GM12878 (cell line): ENCODE measurements at regions of chr13 and their contacts with region 1.

Region 1: GRCh38 chr13:98653463-98653985 is 76.6 kb upstream of the STK24 start:
- DNase-seq: peak; percentile 39
- ATAC-seq: peak; percentile 99
- H3K4me3 ChIP-seq: no peak overlapping the region
- H3K27ac ChIP-seq: no peak overlapping the region
- H3K4me1 ChIP-seq: peaks cover 3% of the 10 kb centered on the region; the same call in 1 of the 2 replicates
- H3K27me3 ChIP-seq: no peaks in the 10 kb centered on the region
- CTCF ChIP-seq: peak; percentile 91 to 92 (median 92)
- EP300 ChIP-seq: no peak
- POLR2A ChIP-seq: no peak
- RAD21 ChIP-seq: peak; percentile 94

Region 2: DNA sequence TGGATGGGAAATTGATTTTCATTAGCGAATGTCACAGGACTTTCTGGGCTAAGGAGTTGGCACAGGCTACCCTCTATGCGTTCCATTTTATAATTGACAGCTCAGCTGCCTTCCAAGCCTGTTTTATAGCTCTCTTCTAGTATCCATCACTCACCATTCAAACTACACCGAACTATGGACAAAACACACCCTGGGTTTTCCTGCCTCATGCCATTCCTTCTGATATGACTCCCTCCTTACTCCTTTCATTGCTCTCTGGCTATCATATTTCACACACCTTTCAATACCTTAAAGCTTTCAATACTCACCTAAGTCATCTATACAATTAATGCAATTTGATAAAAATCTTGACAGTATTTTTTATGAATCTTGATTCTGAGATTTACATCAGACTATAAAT is 1038.3 kb before region 1 on chr13:
- CTCF ChIA-PET with region 1: no interaction called
- POLR2A ChIA-PET with region 1: no interaction called
- RAD21 ChIA-PET with region 1: no interaction called
- SMC1A ChIA-PET with region 1: no interaction called
- in situ Hi-C with region 1: no loop called
- intact Hi-C with region 1: no loop called
- DNase-seq: no peak
- ATAC-seq: no peak
- H3K4me3 ChIP-seq: no peak overlapping the region
- H3K27ac ChIP-seq: no peak overlapping the region
- H3K4me1 ChIP-seq: no peaks in the 10 kb centered on the region
- H3K27me3 ChIP-seq: no peaks in the 10 kb centered on the region
- CTCF ChIP-seq: no peak
- EP300 ChIP-seq: no peak
- POLR2A ChIP-seq: no peak
- RAD21 ChIP-seq: no peak

Region 3: DNA sequence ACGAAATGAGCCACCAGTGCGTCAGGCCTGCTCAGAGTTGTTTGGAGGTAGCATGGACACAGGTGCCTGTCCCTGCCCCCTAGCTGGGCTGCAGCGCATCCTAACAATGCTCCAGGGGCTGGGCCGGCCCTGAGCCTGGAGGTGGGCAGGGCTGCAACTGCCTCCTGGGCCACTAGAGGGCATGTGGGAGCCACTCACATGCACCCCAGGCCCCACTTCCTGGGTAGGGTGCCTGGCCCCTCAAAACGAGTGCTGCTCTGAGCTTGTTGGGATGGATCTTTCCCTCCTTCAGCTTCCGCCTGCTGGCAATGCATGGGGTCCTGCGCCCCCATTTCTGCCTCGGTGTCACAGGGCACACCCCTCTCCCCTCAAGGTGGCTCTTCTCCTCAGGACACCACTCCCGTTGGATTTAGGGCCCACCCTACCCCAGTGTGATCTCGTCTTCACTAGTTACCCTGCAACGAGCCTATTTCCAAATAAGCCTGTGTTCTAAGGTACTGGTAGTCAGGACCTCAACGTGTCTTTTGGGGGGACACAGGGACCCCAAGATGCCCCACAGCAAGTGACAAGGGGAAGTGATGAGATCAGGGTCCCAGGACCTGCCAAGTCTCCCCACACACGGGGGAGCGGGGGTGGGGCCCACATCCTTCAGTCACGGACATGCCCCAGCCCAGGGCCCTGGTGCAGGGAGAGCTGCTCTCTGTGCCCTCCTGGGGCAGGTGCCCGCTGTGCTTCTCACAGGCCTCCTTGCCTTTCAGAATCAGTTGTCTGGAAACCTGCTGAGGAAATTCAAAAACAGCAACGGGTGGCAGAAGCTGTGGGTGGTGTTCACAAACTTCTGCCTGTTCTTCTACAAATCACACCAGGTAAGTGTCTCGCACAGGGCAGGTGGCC is 207.9 kb before region 1 on chr13:
- CTCF ChIA-PET with region 1: interaction called, 135 read pairs
- POLR2A ChIA-PET with region 1: no interaction called
- RAD21 ChIA-PET with region 1: interaction called, 89 read pairs
- SMC1A ChIA-PET with region 1: interaction called, 66 read pairs
- in situ Hi-C with region 1: loop called (anchors 5 kb)
- intact Hi-C with region 1: loop called (anchors 1 kb)
- DNase-seq: peak; percentile 17
- ATAC-seq: peak; percentile 97
- H3K4me3 ChIP-seq: no peak overlapping the region
- H3K27ac ChIP-seq: peak overlapping the region; percentile 53
- H3K4me1 ChIP-seq: peaks cover 6% of the 10 kb centered on the region
- H3K27me3 ChIP-seq: no peaks in the 10 kb centered on the region
- CTCF ChIP-seq: peak; percentile 90 to 100 (median 98); a peak in 5 of 6 replicates
- EP300 ChIP-seq: no peak
- POLR2A ChIP-seq: no peak; the same call in 1 of the 2 replicates
- RAD21 ChIP-seq: peak; percentile 93

Region 4: DNA sequence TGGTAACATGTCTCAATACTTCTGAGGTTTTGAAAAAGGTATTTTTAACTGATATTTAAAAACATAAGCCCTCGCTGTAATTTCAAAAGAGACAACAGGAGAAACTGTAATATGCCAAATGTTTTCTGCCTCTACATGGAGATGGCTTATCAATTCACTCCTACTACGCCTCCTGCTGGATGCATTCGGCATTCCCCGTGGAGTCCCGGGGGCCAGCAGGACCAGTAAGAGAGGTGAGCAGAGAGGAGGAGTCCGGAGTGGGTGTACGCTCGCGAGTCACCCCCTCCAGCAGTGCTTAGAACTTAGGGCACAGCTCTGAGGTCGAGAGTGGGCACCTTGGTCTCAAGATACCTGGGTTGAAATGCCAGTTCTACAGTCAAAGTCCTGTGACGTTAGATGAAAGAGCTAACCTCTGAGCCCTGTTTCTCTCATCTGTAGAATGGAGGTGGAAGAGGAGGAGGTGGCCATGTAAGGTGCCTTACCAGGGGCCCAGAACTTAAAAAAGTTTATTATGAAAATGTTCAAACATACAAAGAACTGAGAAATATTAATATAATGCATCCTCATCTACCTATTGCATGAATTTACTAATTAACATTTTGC is 186.8 kb before region 1 on chr13:
- CTCF ChIA-PET with region 1: interaction called, 54 read pairs
- POLR2A ChIA-PET with region 1: no interaction called
- RAD21 ChIA-PET with region 1: interaction called, 5 read pairs
- SMC1A ChIA-PET with region 1: interaction called, 15 read pairs
- in situ Hi-C with region 1: no loop called
- intact Hi-C with region 1: loop called (anchors 5 kb)
- DNase-seq: no peak
- ATAC-seq: peak; percentile 78
- H3K4me3 ChIP-seq: no peak overlapping the region
- H3K27ac ChIP-seq: no peak overlapping the region
- H3K4me1 ChIP-seq: no peaks in the 10 kb centered on the region
- H3K27me3 ChIP-seq: no peaks in the 10 kb centered on the region
- CTCF ChIP-seq: peak; percentile 31 to 65 (median 61); a peak in 5 of 6 replicates
- EP300 ChIP-seq: no peak
- POLR2A ChIP-seq: no peak
- RAD21 ChIP-seq: peak; percentile 37

Region 5: GRCh38 chr13:98484289-98485219 is 169.0 kb before region 1 on chr13:
- CTCF ChIA-PET with region 1: interaction called, 56 read pairs
- POLR2A ChIA-PET with region 1: interaction called, 4 read pairs
- RAD21 ChIA-PET with region 1: interaction called, 40 read pairs
- SMC1A ChIA-PET with region 1: interaction called, 38 read pairs
- in situ Hi-C with region 1: no loop called
- intact Hi-C with region 1: no loop called
- DNase-seq: no peak
- ATAC-seq: peak; percentile 70
- H3K4me3 ChIP-seq: no peak overlapping the region
- H3K27ac ChIP-seq: peak overlapping the region; percentile 79
- H3K4me1 ChIP-seq: peaks cover 81% of the 10 kb centered on the region
- H3K27me3 ChIP-seq: no peaks in the 10 kb centered on the region
- CTCF ChIP-seq: no peak
- EP300 ChIP-seq: no peak
- POLR2A ChIP-seq: no peak
- RAD21 ChIP-seq: no peak

Region 6: DNA sequence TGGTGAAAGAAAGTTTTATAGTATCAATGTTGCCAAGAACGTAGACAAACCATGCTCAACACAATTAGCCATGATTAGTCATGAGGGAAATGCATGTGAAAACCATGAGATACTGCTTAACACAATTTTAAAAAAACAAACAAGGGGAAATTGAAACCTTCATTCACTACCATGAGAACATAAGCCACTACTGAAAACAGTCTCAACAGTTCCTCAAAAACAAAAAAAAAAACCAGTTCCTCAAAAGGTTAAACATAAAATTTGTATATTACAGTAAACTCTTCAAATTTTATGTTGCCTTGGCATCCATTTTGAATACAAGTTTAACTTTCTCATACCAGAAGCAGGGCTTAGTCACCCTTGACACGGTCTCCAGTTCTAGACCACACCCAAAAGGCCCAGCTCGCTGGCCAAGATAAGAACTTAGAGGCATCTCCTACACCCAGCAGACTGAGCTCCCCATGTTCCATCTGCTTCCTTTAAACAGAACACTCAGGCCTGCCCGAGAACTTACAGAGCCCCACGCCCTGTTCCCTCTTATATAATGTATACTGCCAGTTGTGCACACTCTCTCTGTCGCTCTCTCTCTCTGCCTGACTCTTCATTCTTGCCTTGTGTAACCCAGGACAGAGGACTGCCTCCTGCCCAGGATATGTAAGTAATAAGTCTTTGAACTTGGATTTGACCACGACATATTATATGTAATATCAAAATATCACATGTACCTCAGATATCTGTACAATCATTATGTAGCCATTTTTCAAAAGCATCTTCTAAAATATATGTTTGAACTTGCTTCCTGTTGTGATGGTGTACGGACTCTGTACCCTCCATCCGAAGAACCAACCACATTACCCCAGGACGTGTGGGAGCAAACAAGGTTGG is 144.0 kb before region 1 on chr13:
- CTCF ChIA-PET with region 1: interaction called, 20 read pairs
- POLR2A ChIA-PET with region 1: no interaction called
- RAD21 ChIA-PET with region 1: interaction called, 11 read pairs
- SMC1A ChIA-PET with region 1: interaction called, 12 read pairs
- in situ Hi-C with region 1: no loop called
- intact Hi-C with region 1: no loop called
- DNase-seq: peak; percentile 79
- ATAC-seq: peak; percentile 67
- H3K4me3 ChIP-seq: no peak overlapping the region
- H3K27ac ChIP-seq: peak overlapping the region; percentile 72
- H3K4me1 ChIP-seq: peaks cover 80% of the 10 kb centered on the region
- H3K27me3 ChIP-seq: no peaks in the 10 kb centered on the region
- CTCF ChIP-seq: no peak
- EP300 ChIP-seq: peak; percentile 49 to 72; a peak in 2 of 4 replicates
- POLR2A ChIP-seq: no peak
- RAD21 ChIP-seq: no peak

Region 7: DNA sequence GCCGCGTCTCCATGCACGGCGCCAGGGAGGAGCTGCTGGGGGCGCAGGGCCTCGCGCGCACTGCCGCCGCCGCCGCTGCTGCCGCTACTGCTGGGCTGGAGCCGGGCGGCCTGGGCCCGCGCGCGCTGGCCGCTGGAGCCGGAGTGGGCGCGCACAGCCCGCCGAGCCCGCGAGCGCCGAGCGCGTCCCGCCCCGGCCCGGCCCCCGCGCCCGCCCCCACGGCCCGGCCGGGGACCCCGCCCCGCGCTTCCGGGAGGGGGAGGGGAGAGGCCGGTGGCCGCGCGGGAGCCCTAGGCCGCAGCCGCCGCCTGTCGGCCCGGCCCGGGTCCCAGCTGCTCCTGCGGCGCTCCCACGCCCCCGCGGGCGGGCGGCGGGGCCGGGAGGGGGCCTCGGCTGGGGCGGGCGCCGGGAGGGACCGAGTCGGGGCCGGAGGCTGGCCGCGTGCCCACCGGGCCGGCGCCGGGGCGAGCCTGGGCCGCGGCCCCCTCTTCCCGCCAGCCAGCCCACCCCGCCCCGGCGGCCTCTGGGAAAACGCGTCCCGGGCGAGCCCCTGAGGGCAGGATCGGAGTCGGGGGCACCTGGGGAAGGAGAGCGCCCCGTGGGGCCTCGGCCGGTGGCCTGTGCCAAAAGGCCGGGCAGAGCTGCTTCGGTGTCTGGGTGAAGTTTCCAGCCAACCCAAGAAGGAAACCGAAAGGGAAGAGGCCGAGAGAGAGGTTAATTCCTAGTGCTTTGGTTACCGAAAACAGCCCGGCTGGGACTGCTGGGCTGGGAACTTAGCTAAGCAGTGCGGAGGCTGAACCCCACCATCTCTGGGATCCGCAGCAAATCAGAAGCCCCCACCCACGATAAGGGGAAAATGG is 76.3 kb before region 1 on chr13 and contains the start of gene STK24:
- CTCF ChIA-PET with region 1: interaction called, 20 read pairs
- POLR2A ChIA-PET with region 1: no interaction called
- RAD21 ChIA-PET with region 1: interaction called, 13 read pairs
- SMC1A ChIA-PET with region 1: interaction called, 8 read pairs
- in situ Hi-C with region 1: no loop called
- intact Hi-C with region 1: loop called (anchors 5 kb)
- DNase-seq: no peak
- ATAC-seq: peak; percentile 45
- H3K4me3 ChIP-seq: peak within 1 kb of the TSS; percentile 87
- H3K27ac ChIP-seq: peak within 1 kb of the TSS; percentile 81
- H3K4me1 ChIP-seq: peaks cover 12% of the 10 kb centered on the region
- H3K27me3 ChIP-seq: no peaks in the 10 kb centered on the region
- CTCF ChIP-seq: peak in 1 of 3 experiments; percentile 24; a peak in 1 of 6 replicates
- EP300 ChIP-seq: no peak
- POLR2A ChIP-seq: peak; percentile 78
- RAD21 ChIP-seq: no peak
- polyA plus RNA-seq, gene STK24: 9.9 to 19.1 TPM

Region 8: DNA sequence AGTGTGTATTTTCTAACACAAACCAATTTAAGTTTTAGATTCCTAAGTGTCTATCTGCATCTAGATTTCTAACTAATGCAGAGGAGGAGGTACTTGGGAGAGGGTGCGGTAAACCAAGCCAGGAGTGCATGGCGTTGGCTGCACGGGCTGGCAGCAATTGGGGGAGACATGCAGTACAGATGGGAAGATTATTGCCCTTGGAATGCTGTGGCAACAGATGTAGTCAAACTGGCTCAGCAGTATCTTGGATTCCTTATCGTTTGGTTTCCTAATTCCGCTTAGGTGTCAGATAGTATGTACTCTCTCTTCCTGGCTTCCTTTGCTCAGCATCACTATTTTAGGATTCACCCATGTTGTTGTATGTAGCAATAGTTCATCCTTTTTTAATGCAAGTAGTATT is 47.2 kb before region 1 on chr13:
- CTCF ChIA-PET with region 1: no interaction called
- POLR2A ChIA-PET with region 1: no interaction called
- RAD21 ChIA-PET with region 1: no interaction called
- SMC1A ChIA-PET with region 1: no interaction called
- in situ Hi-C with region 1: no loop called
- intact Hi-C with region 1: no loop called
- DNase-seq: no peak
- ATAC-seq: no peak
- H3K4me3 ChIP-seq: no peak overlapping the region
- H3K27ac ChIP-seq: no peak overlapping the region
- H3K4me1 ChIP-seq: no peaks in the 10 kb centered on the region
- H3K27me3 ChIP-seq: no peaks in the 10 kb centered on the region
- CTCF ChIP-seq: no peak
- EP300 ChIP-seq: no peak
- POLR2A ChIP-seq: no peak
- RAD21 ChIP-seq: no peak

Region 9: DNA sequence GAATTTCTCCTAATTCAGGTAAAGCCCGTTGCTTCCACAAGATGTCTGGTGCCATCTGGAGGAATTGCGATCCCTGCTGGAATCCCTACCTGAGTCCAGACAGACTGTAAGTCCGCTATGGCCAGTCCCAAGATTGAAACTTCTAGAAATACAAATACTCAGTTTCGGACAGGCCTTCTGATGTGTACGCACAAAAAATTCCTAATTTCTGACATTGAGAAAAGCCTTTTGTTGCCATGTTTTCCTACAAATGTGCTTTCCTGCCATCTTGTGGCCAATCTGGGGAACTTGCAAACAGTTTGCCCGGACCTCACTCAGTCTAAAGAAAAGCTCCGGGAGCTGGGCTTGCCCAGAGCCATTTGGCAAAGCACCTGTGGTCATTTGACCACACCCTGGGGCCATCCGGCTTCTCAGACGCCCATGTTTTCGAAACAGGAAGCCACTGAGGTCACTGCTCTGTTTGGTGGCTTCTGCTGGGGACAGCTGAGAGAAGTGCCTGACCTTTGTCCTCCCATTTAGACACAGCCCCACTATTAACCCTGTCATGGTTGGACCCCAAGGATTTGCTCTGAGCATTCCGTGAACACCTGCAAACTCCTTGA is 19.5 kb after region 1 on chr13:
- CTCF ChIA-PET with region 1: interaction called, 21 read pairs
- POLR2A ChIA-PET with region 1: no interaction called
- RAD21 ChIA-PET with region 1: interaction called, 10 read pairs
- SMC1A ChIA-PET with region 1: interaction called, 8 read pairs
- in situ Hi-C with region 1: no loop called
- intact Hi-C with region 1: no loop called
- DNase-seq: peak; percentile 13
- ATAC-seq: peak; percentile 96
- H3K4me3 ChIP-seq: no peak overlapping the region
- H3K27ac ChIP-seq: no peak overlapping the region
- H3K4me1 ChIP-seq: no peaks in the 10 kb centered on the region
- H3K27me3 ChIP-seq: no peaks in the 10 kb centered on the region; a peak in 1 of 4 replicates
- CTCF ChIP-seq: peak; percentile 85 to 90 (median 86)
- EP300 ChIP-seq: no peak
- POLR2A ChIP-seq: no peak
- RAD21 ChIP-seq: peak; percentile 88